ENCODE measurements at regions of chr5 and their contacts with region 1.

Region 1: GRCh38 chr5:103258368-103258956 is at the start of gene MACIR:
- DNase-seq: peak; percentile 97
- ATAC-seq: peak; percentile 94
- H3K4me3 Mint-ChIP-seq: peak within 1 kb of the TSS; percentile 95
- H3K27ac Mint-ChIP-seq: peak within 1 kb of the TSS; percentile 91
- H3K4me1 Mint-ChIP-seq: peaks cover 39% of the 10 kb centered on the region
- H3K27me3 Mint-ChIP-seq: no peaks in the 10 kb centered on the region
- CTCF ChIP-seq: no peak
- total RNA-seq, gene MACIR: 12.4 to 13.8 TPM (median 13.1 TPM) in 3 replicates

Region 2: DNA sequence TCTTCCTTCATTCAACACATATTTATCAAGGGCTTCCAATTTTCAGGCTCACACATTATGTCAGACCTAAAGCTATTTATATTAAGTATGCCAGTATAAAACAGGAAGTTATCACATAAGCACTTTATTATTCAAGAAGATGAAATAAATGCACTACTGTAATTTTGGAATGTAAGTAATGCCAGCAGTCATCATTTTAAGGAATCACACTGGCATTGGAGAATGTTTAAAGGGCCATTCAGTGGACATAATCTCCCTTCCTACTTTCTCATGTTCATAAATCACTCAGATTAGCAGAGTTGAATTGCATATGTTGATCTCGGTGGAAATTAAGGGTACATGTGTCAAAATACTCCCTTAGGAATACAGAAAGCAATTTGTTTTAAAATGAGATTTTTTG is 303.0 kb before region 1 on chr5:
- CTCF ChIA-PET with region 1: no interaction called
- POLR2A ChIA-PET with region 1: no interaction called
- DNase-seq: no peak
- ATAC-seq: no peak
- H3K4me3 Mint-ChIP-seq: no peak overlapping the region
- H3K27ac Mint-ChIP-seq: no peak overlapping the region
- H3K4me1 Mint-ChIP-seq: no peaks in the 10 kb centered on the region
- H3K27me3 Mint-ChIP-seq: no peaks in the 10 kb centered on the region
- CTCF ChIP-seq: no peak

Region 3: GRCh38 chr5:103119765-103120606 is 138.5 kb before region 1 on chr5 and contains the starts of genes GIN1 and PPIP5K2:
- CTCF ChIA-PET with region 1: interaction called, 3 read pairs
- POLR2A ChIA-PET with region 1: interaction called, 15 read pairs
- DNase-seq: peak; percentile 97
- ATAC-seq: peak; percentile 95
- H3K4me3 Mint-ChIP-seq: peak within 1 kb of the TSS; percentile 98
- H3K27ac Mint-ChIP-seq: peak within 1 kb of the TSS; percentile 100
- H3K4me1 Mint-ChIP-seq: peaks cover 26% of the 10 kb centered on the region
- H3K27me3 Mint-ChIP-seq: no peaks in the 10 kb centered on the region
- CTCF ChIP-seq: no peak
- total RNA-seq, gene GIN1: 5.7 to 7.0 TPM (median 6.7 TPM) in 3 replicates
- total RNA-seq, gene PPIP5K2: 47.3 to 67.6 TPM (median 47.8 TPM) in 3 replicates

Region 4: DNA sequence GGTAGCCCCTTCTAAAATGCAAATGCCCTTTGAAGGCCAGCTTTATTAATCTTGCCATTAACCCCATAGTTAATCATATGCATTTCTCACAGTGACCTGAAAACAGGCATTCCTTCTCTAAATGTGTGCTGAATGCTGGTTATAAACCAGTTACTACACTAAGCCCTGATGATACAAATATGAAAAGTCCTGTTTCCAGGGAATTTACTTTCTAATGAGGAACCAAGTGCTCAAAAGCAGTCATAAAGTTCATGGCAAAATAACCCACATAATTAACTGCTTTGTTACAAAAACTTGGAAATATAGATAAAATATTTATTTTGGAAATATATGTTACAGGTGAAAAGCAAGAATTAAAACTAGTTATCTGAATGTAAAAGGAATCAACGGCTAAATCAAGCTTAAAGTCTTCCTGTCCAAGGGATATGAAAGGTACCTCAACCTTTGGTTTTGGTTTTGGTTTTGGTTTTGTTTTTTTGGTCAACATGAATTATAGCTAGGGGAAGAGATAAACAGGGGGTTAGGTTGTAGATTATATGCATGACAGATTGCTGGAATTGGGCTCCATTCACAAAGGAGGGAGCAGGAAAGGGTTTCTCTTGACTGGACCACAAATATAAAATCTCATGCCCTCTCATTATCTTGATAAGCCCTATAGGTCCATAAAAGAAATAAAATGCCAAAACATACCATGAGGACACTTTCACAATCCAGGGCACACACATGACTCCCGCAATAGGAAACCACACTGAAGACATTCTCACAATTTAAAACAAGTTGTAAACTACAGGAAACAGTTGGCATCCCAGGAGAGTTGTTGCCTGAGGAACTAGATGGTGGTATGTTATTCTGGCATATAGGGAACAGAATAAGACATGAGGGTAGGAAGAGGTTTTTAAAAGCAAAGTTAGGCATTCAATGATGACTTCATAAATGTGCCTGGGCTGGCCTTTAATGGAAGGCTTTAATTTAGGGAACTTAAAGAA is 46.6 kb before region 1 on chr5:
- CTCF ChIA-PET with region 1: no interaction called
- POLR2A ChIA-PET with region 1: no interaction called
- DNase-seq: no peak
- ATAC-seq: no peak
- H3K4me3 Mint-ChIP-seq: no peak overlapping the region
- H3K27ac Mint-ChIP-seq: no peak overlapping the region; the same call in 1 of the 2 replicates
- H3K4me1 Mint-ChIP-seq: peaks cover 14% of the 10 kb centered on the region; the same call in 1 of the 2 replicates
- H3K27me3 Mint-ChIP-seq: no peaks in the 10 kb centered on the region
- CTCF ChIP-seq: no peak

Region 5: GRCh38 chr5:103232393-103232999 is 26.0 kb before region 1 on chr5:
- CTCF ChIA-PET with region 1: interaction called, 10 read pairs
- POLR2A ChIA-PET with region 1: no interaction called
- DNase-seq: no peak
- ATAC-seq: peak; percentile 84
- H3K4me3 Mint-ChIP-seq: no peak overlapping the region
- H3K27ac Mint-ChIP-seq: no peak overlapping the region
- H3K4me1 Mint-ChIP-seq: no peaks in the 10 kb centered on the region
- H3K27me3 Mint-ChIP-seq: no peaks in the 10 kb centered on the region
- CTCF ChIP-seq: peak; percentile 50

Region 6: GRCh38 chr5:103247118-103247517 is 11.3 kb before region 1 on chr5:
- CTCF ChIA-PET with region 1: no interaction called
- POLR2A ChIA-PET with region 1: no interaction called
- DNase-seq: no peak
- ATAC-seq: no peak
- H3K4me3 Mint-ChIP-seq: no peak overlapping the region
- H3K27ac Mint-ChIP-seq: no peak overlapping the region
- H3K4me1 Mint-ChIP-seq: no peaks in the 10 kb centered on the region; the same call in 1 of the 2 replicates
- H3K27me3 Mint-ChIP-seq: no peaks in the 10 kb centered on the region
- CTCF ChIP-seq: no peak

Region 7: DNA sequence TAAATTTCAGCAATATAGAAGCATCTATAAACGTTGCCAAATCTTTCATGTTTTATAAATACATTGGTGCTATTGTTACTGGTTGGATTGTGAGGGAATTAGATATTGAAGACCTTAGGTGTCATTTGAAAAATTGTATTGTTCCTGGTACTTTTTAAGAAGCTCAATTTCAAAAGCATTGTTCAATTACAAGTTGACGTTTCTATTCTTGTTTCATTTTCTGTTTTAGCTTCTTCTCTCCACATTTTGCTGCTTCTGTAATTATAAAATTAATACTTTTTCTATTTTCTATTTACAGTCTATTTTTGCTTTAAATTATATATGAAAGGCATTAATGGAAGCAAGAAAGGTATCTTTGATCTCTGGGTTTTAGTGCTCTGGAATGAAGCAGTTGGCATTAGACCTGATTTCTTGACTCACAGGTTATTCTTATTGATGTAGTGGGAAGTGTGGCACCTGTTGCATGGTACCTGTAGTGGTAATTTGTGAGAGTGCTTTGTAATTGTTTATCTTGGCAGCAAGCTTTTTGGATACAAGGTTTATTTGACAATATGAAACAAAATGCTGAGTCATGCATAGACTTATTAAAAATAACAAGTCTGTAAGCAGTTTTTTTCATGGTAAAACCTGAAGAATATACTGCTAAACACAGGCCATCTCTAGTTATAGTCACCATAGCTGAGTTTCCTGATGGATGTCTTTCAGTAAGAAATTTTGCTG is 13.3 kb after region 1 on chr5:
- CTCF ChIA-PET with region 1: interaction called, 4 read pairs
- POLR2A ChIA-PET with region 1: interaction called, 10 read pairs
- DNase-seq: no peak
- ATAC-seq: no peak
- H3K4me3 Mint-ChIP-seq: no peak overlapping the region
- H3K27ac Mint-ChIP-seq: no peak overlapping the region; the same call in 1 of the 2 replicates
- H3K4me1 Mint-ChIP-seq: peaks cover 27% of the 10 kb centered on the region
- H3K27me3 Mint-ChIP-seq: no peaks in the 10 kb centered on the region
- CTCF ChIP-seq: no peak

Region 8: DNA sequence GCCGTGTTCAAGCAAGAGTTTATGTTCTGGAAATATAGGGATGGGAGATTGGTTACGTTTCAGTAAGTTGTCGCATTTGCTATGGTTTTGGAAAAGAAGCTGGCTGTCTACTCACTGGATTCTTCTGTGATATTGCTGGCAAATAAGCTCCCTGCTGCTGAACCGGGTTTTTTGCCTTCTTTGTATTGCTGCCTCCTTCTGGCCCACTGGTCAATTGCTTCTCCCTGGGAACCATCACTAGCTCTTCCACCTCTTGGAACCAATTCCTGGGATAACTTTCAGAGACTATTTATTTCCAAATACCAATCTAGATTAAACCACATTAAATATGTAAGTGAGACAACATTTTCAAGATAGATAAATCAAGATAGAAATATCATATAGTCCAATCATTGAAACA is 261.1 kb after region 1 on chr5:
- CTCF ChIA-PET with region 1: interaction called, 17 read pairs
- POLR2A ChIA-PET with region 1: no interaction called
- DNase-seq: peak; percentile 27
- ATAC-seq: peak; percentile 83
- H3K4me3 Mint-ChIP-seq: no peak overlapping the region
- H3K27ac Mint-ChIP-seq: no peak overlapping the region
- H3K4me1 Mint-ChIP-seq: peaks cover 10% of the 10 kb centered on the region
- H3K27me3 Mint-ChIP-seq: no peaks in the 10 kb centered on the region
- CTCF ChIP-seq: peak; percentile 14; the same call in 1 of the 2 replicates